Right ventricle myocardium superior (tissue), 1 donor: ENCODE measurements at regions of chr17 and their contacts with region 1.

Region 1: GRCh38 chr17:42677008-42677857 is 439 bp upstream of the PLEKHH3 start:
- DNase-seq: peak; percentile 100
- ATAC-seq: peak; percentile 64

Region 2: DNA sequence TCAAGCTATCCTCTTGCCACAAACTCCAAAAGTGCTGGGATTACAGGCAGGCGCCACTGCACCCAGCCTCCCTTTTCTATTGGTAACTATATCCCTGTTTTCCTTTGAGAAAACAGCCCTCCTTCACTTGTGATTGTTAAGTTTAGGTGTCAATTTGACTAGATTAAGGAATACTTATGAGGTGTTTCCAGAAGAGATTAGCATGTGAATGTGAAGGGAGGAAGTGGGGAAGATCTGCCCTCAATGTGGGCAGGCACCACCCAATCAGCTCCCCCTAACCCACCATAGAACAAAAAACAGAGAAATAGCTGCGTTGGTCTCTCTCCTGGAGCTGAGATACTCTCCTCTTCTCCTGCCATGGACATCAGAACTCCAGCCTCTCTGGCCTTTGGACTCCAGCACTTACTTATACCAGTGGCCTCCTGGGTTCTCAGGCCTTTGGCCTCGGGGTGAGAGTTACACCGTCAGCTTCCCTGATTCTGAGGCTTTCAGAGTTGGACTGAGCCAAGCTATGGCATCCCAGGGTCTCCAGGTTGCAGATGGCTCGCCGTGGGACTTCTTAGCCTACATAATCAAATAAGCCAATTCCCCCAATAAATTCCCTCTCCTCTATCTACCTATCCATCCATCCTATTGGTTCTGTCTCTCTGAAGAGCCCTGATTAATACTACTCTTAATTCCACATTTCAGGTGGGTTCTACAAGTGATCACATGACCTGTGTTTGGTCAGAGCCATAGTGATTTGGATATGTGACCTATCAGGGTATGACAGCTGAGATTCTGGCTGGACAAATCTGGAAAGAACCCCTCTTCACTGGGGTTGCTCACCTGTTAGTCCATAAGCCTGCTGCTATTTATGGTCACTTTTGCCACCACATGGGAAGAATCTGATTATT is 277.0 kb before region 1 on chr17:
- intact Hi-C with region 1: no loop called
- DNase-seq: no peak
- ATAC-seq: no peak

Region 3: GRCh38 chr17:42586514-42587230 is 90.6 kb before region 1 on chr17:
- intact Hi-C with region 1: loop called (anchors 5 kb)
- DNase-seq: no peak
- ATAC-seq: no peak

Region 4: GRCh38 chr17:42609182-42609813 is 67.9 kb before region 1 on chr17 and contains the starts of genes RETREG3 and TUBG1:
- intact Hi-C with region 1: loop called (anchors 5 kb)
- DNase-seq: peak; percentile 100
- ATAC-seq: peak; percentile 98
- total RNA-seq, gene RETREG3: 21.4 TPM
- total RNA-seq, gene TUBG1: 49.1 TPM

Region 5: DNA sequence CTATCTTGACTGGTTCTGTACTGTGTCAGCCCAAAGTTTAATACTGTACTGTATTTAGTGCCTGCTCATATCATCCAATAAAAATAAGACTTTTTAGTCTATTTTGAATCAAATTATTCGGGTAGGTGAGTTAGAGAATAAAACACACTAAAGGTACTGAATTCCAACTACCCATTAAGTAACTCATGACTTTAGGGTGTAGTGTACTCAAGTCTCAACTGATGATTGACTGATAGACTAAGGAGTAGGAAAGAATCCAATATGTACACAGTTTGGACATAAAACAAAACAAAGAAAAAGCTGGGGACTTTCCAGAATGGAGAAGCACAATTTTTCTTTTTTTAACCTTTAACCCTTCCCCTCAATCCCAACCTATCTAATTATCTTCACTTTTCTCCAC is 63.5 kb after region 1 on chr17:
- intact Hi-C with region 1: no loop called
- DNase-seq: no peak
- ATAC-seq: no peak